CD14-positive monocyte (primary cell): ENCODE measurements at regions of chr1 and their contacts with region 1.

Region 1: DNA sequence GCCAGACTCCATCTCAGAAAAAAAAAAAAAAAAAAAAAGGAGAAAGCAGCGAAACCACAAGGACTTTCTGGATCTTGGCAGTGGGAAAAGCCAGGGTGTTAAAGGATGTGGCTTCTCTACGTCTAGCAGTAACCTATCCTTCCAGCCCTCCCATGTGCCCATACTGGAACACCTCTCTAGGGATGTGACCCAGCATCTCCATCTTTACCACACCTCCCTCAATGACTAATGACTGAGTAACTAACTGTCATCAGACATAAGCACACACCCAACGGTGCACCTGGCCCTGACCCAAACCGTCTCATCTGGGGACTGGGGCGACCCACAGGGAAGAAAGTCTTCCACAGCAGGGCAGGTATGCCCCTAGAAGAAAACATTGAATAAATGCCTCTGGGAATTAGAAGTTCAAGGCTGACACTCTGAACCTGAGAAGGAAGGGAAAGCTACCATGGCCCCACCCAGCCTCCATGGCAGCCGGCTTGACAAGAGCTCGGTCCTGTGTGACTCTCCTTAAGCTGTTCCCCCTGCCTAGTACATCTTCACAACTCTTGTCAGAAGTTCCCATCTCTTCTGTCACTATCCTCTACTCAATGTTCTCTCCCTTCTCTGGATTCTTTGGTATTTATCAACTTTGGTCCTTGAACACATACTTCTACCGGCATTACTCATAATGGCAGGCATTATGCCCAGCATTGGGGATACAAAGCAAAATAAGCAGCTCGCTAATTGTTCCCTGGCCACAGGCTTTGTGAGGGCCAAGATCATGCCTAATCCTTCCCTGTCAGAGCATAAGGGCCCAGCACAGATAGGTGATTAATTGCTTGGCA is 14.8 kb upstream of the PAQR6 start:
- DNase-seq: no peak
- H3K4me3 ChIP-seq: no peak overlapping the region
- H3K4me3 Mint-ChIP-seq: no peak overlapping the region
- H3K27ac ChIP-seq: no peak overlapping the region
- H3K27ac Mint-ChIP-seq: peak overlapping the region in 2 of 7 donors; percentile 4 to 27
- H3K4me1 ChIP-seq: no peaks in the 10 kb centered on the region
- H3K4me1 Mint-ChIP-seq: no peaks in the 10 kb centered on the region
- H3K27me3 ChIP-seq: no peaks in the 10 kb centered on the region
- H3K27me3 Mint-ChIP-seq: no peaks in the 10 kb centered on the region
- CTCF ChIP-seq: no peak

Region 2: DNA sequence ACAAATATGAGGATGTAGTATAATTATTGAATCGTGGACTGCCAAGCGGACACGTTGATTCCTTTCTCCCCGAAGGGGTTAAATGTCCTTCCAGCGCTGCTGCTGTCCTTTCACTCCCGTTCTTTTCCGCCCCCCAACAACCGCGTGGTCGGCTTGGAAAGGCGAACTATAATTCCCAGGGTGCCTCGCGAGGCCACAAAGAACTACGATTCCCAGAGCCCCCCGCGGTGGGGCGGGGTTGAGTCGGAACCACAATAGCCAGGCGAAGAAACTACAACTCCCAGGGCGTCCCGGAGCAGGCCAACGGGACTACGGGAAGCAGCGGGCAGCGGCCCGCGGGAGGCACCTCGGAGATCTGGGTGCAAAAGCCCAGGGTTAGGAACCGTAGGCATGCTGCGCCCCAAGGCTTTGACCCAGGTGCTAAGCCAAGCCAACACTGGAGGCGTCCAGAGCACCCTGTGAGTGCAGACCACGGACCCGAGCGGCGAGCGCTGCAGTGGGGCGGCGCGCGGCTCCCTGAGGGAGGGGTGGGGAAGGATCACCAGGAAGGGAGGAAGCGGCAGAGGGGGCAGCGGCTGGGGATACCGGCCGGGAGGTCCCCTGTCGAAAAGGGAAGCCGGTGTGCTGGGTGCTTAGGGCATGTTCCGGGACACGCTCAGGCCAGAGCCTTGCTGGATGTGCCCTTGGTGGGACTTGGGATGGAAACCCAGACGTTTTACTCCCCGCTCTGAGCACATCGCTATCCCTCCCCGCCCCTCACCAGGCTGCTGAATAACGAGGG is 208.0 kb before region 1 on chr1 and contains the start of gene LAMTOR2:
- intact Hi-C with region 1: no loop called
- DNase-seq: peak; percentile 87 to 93 (median 91)
- H3K4me3 ChIP-seq: peak within 1 kb of the TSS; percentile 61 to 99 (median 93)
- H3K4me3 Mint-ChIP-seq: peak within 1 kb of the TSS; percentile 93 to 97
- H3K27ac ChIP-seq: peak within 1 kb of the TSS; percentile 84 to 86
- H3K27ac Mint-ChIP-seq: peak within 1 kb of the TSS; percentile 84 to 96 (median 93)
- H3K4me1 ChIP-seq: peaks cover 23 to 38% of the 10 kb centered on the region in 2 donors
- H3K4me1 Mint-ChIP-seq: peaks cover 25% of the 10 kb centered on the region
- H3K27me3 ChIP-seq: no peaks in the 10 kb centered on the region
- H3K27me3 Mint-ChIP-seq: peaks cover 0 to 2% (median 1%) of the 10 kb centered on the region in 3 donors
- CTCF ChIP-seq: no peak
- polyA plus RNA-seq, gene LAMTOR2: 99.8 to 227 (median 210) TPM

Region 3: DNA sequence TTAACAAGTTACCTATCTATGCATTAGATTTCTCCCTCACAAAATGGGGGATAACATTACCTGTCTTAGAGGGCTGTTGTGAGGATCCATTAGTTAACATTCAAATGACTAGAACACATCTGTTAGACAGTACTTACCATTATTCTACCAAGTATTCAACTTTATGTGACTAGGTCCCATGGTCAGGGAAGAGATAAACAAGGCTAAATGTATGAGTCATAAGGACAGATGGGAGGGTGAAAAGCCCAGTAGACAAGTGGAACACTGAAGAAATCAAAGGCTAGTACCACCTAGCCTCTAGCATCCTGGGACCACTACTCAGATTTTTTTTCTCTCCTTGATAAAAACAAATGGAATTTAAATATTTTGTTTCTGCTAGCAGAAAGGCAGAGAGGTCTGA is 45.4 kb after region 1 on chr1:
- intact Hi-C with region 1: loop called in 1 of 2 experiments (anchors 5 kb)
- DNase-seq: no peak
- H3K4me3 ChIP-seq: no peak overlapping the region
- H3K4me3 Mint-ChIP-seq: no peak overlapping the region
- H3K27ac ChIP-seq: no peak overlapping the region
- H3K27ac Mint-ChIP-seq: no peak overlapping the region
- H3K4me1 ChIP-seq: peaks cover 10% of the 10 kb centered on the region in 2 donors
- H3K4me1 Mint-ChIP-seq: peaks cover 16% of the 10 kb centered on the region
- H3K27me3 ChIP-seq: no peaks in the 10 kb centered on the region
- H3K27me3 Mint-ChIP-seq: peaks cover 0 to 1% (median 0%) of the 10 kb centered on the region in 3 donors
- CTCF ChIP-seq: no peak